Mammary epithelial cell (primary cell): ENCODE measurements at regions of chr7 and their contacts with region 1.

Region 1: GRCh38 chr7:73749931-73750776 is 11.6 kb upstream of the ABHD11 start:
- DNase-seq: no peak
- H3K4me3 ChIP-seq: no peak overlapping the region
- H3K27ac ChIP-seq: no peak overlapping the region
- H3K4me1 ChIP-seq: no peaks in the 10 kb centered on the region
- H3K27me3 ChIP-seq: no peaks in the 10 kb centered on the region
- CTCF ChIP-seq: no peak

Region 2: GRCh38 chr7:73578342-73579127 is 171.6 kb before region 1 on chr7 and contains the start of gene TBL2:
- CTCF ChIA-PET with region 1: no interaction called
- dilution Hi-C with region 1: loop called (anchors 5 kb)
- in situ Hi-C with region 1: no loop called
- intact Hi-C with region 1: no loop called
- DNase-seq: peak; percentile 97
- H3K4me3 ChIP-seq: peak within 1 kb of the TSS; percentile 91 to 99 (median 97)
- H3K27ac ChIP-seq: peak within 1 kb of the TSS; percentile 73
- H3K4me1 ChIP-seq: peaks cover 13% of the 10 kb centered on the region
- H3K27me3 ChIP-seq: no peaks in the 10 kb centered on the region
- CTCF ChIP-seq: peak in 1 of 2 donors; percentile 41
- total RNA-seq, gene TBL2: 30.0 to 34.5 TPM

Region 3: GRCh38 chr7:73811760-73812168 is 61.6 kb after region 1 on chr7:
- CTCF ChIA-PET with region 1: no interaction called
- dilution Hi-C with region 1: loop called (anchors 5 kb)
- in situ Hi-C with region 1: no loop called
- intact Hi-C with region 1: no loop called
- DNase-seq: peak; percentile 68
- H3K4me3 ChIP-seq: no peak overlapping the region
- H3K27ac ChIP-seq: no peak overlapping the region
- H3K4me1 ChIP-seq: peaks cover 2% of the 10 kb centered on the region
- H3K27me3 ChIP-seq: no peaks in the 10 kb centered on the region
- CTCF ChIP-seq: peak; percentile 87 to 93

Region 4: DNA sequence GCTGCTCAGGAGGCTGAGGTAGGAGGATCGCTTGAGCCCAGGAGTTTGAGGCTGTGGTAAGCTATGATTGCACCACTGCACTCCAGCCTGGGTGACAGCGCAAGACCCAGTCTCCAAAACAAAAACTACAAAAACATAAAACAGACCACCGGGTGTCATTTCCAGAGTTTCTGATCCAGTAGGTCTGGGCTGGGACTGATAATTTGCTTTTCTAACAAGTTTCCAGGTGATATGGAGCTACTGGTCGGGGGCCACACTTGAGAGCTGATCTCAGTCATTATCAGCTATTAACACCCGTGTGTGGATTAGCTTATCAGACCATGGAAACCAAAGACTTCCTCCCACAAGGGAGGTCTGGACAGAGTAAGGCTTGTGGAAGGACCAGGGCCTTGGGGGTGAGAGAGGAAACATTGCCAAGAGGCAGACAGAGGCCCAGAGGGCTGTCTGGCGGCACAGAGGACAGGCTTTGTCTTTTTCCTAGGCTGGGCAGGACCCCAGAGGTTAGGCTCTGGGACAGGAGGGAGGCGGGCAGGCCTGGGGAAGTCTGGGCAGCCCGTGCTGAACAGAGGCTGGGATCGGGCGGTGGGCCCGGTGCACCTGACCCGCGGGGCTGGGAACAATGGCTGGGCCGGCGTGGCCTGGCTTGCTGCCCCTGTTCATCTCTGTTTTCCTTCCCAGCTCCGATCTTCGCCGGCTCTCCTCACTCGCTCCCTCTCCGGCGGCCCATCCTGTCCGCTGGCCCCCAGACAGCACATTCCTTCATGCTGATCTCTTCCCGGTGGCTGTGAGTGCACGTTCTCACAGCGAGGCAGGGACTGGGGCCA is 136.0 kb after region 1 on chr7:
- CTCF ChIA-PET with region 1: no interaction called
- dilution Hi-C with region 1: no loop called
- in situ Hi-C with region 1: no loop called
- intact Hi-C with region 1: no loop called
- DNase-seq: no peak
- H3K4me3 ChIP-seq: no peak overlapping the region
- H3K27ac ChIP-seq: no peak overlapping the region
- H3K4me1 ChIP-seq: no peaks in the 10 kb centered on the region
- H3K27me3 ChIP-seq: peaks cover 7% of the 10 kb centered on the region
- CTCF ChIP-seq: no peak

Region 5: GRCh38 chr7:74012842-74013249 is 262.7 kb after region 1 on chr7:
- CTCF ChIA-PET with region 1: no interaction called
- dilution Hi-C with region 1: loop called (anchors 10 kb)
- in situ Hi-C with region 1: no loop called
- intact Hi-C with region 1: no loop called
- DNase-seq: peak; percentile 48
- H3K4me3 ChIP-seq: no peak overlapping the region
- H3K27ac ChIP-seq: no peak overlapping the region
- H3K4me1 ChIP-seq: peaks cover 9% of the 10 kb centered on the region
- H3K27me3 ChIP-seq: no peaks in the 10 kb centered on the region
- CTCF ChIP-seq: no peak